Panc1 (cell line): ENCODE measurements at regions of chr18 and their contacts with region 1.

Region 1: GRCh38 chr18:3552305-3552704 is 102.3 kb downstream of the TGIF1 start:
- DNase-seq: no peak
- ATAC-seq: no peak
- H3K4me3 ChIP-seq: no peak overlapping the region
- H3K27ac ChIP-seq: peak overlapping the region; percentile 57
- H3K4me1 ChIP-seq: no peaks in the 10 kb centered on the region; the same call in 1 of the 2 replicates
- H3K27me3 ChIP-seq: no peaks in the 10 kb centered on the region
- CTCF ChIP-seq: no peak

Region 2: GRCh38 chr18:3424280-3424890 is 127.9 kb before region 1 on chr18:
- CTCF ChIA-PET with region 1: no interaction called
- POLR2A ChIA-PET with region 1: interaction called, 11 read pairs
- in situ Hi-C with region 1: no loop called
- intact Hi-C with region 1: no loop called
- DNase-seq: no peak
- ATAC-seq: no peak
- H3K4me3 ChIP-seq: no peak overlapping the region
- H3K27ac ChIP-seq: no peak overlapping the region; the same call in 1 of the 2 replicates
- H3K4me1 ChIP-seq: no peaks in the 10 kb centered on the region
- H3K27me3 ChIP-seq: no peaks in the 10 kb centered on the region
- CTCF ChIP-seq: no peak

Region 3: DNA sequence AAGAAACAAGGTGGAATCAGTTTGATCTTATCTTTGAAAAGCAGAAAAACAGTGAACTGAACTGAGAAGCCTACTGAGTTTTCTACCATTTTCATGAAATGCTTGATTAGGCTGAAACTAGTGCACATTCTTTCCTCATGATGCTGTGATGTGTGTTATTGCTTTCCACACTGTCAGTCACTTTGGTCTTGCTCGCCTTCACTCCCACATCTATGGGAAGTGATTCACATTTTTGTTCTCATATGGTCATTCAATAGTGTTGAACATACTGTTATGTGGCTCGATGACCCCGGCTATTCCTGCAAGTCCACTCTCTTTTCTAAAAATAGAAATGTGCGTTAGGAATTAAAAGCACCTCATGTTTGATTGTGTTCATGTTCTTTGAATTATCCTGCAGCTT is 27.4 kb after region 1 on chr18:
- CTCF ChIA-PET with region 1: no interaction called
- POLR2A ChIA-PET with region 1: no interaction called
- in situ Hi-C with region 1: no loop called
- intact Hi-C with region 1: no loop called
- DNase-seq: no peak
- ATAC-seq: no peak; the same call in 1 of the 2 replicates
- H3K4me3 ChIP-seq: no peak overlapping the region
- H3K27ac ChIP-seq: peak overlapping the region; percentile 63
- H3K4me1 ChIP-seq: peaks cover 4% of the 10 kb centered on the region
- H3K27me3 ChIP-seq: no peaks in the 10 kb centered on the region
- CTCF ChIP-seq: no peak

Region 4: GRCh38 chr18:3688699-3689098 is 136.4 kb after region 1 on chr18:
- CTCF ChIA-PET with region 1: no interaction called
- POLR2A ChIA-PET with region 1: no interaction called
- in situ Hi-C with region 1: no loop called
- intact Hi-C with region 1: no loop called
- DNase-seq: no peak
- ATAC-seq: peak; percentile 73
- H3K4me3 ChIP-seq: no peak overlapping the region
- H3K27ac ChIP-seq: peak overlapping the region; percentile 80
- H3K4me1 ChIP-seq: peaks cover 14% of the 10 kb centered on the region
- H3K27me3 ChIP-seq: no peaks in the 10 kb centered on the region
- CTCF ChIP-seq: no peak

Region 5: GRCh38 chr18:3816610-3817363 is 264.5 kb after region 1 on chr18:
- CTCF ChIA-PET with region 1: no interaction called
- POLR2A ChIA-PET with region 1: no interaction called
- in situ Hi-C with region 1: no loop called
- intact Hi-C with region 1: no loop called
- DNase-seq: no peak
- ATAC-seq: no peak
- H3K4me3 ChIP-seq: no peak overlapping the region
- H3K27ac ChIP-seq: no peak overlapping the region
- H3K4me1 ChIP-seq: 0 out of 2 replicates have a peak, but pooled peaks cover 3% of the 10 kb centered on the region
- H3K27me3 ChIP-seq: no peaks in the 10 kb centered on the region
- CTCF ChIP-seq: no peak